ENCODE measurements at regions of chr3 and their contacts with region 1.

Region 1: GRCh38 chr3:112013058-112013783 is 14.5 kb downstream of the TAGLN3 start:
- DNase-seq: peak; percentile 21
- ATAC-seq: peak; percentile 82
- H3K4me3 Mint-ChIP-seq: peak overlapping the region; percentile 21
- H3K27ac Mint-ChIP-seq: no peak overlapping the region
- H3K4me1 Mint-ChIP-seq: peaks cover 16% of the 10 kb centered on the region
- H3K27me3 Mint-ChIP-seq: no peaks in the 10 kb centered on the region
- CTCF ChIP-seq: no peak

Region 2: GRCh38 chr3:111967651-111968274 is 45.5 kb before region 1 on chr3:
- CTCF ChIA-PET with region 1: interaction called, 6 read pairs
- POLR2A ChIA-PET with region 1: no interaction called
- intact Hi-C with region 1: loop called (anchors 1 kb)
- DNase-seq: peak; percentile 39
- ATAC-seq: peak; percentile 90
- H3K4me3 Mint-ChIP-seq: peak overlapping the region; percentile 4
- H3K27ac Mint-ChIP-seq: no peak overlapping the region
- H3K4me1 Mint-ChIP-seq: peaks cover 5% of the 10 kb centered on the region
- H3K27me3 Mint-ChIP-seq: no peaks in the 10 kb centered on the region
- CTCF ChIP-seq: peak; percentile 97

Region 3: GRCh38 chr3:111989061-111989678 is 24.1 kb before region 1 on chr3:
- CTCF ChIA-PET with region 1: interaction called, 81 read pairs
- POLR2A ChIA-PET with region 1: no interaction called
- intact Hi-C with region 1: loop called (anchors 1 kb)
- DNase-seq: no peak
- ATAC-seq: peak; percentile 74
- H3K4me3 Mint-ChIP-seq: no peak overlapping the region
- H3K27ac Mint-ChIP-seq: no peak overlapping the region
- H3K4me1 Mint-ChIP-seq: peaks cover 12% of the 10 kb centered on the region
- H3K27me3 Mint-ChIP-seq: no peaks in the 10 kb centered on the region
- CTCF ChIP-seq: peak; percentile 37

Region 4: GRCh38 chr3:112043603-112044201 is 30.5 kb after region 1 on chr3:
- CTCF ChIA-PET with region 1: interaction called, 6 read pairs
- POLR2A ChIA-PET with region 1: no interaction called
- intact Hi-C with region 1: loop called (anchors 2 kb)
- DNase-seq: no peak
- ATAC-seq: peak; percentile 92
- H3K4me3 Mint-ChIP-seq: no peak overlapping the region
- H3K27ac Mint-ChIP-seq: no peak overlapping the region
- H3K4me1 Mint-ChIP-seq: peaks cover 6% of the 10 kb centered on the region
- H3K27me3 Mint-ChIP-seq: no peaks in the 10 kb centered on the region
- CTCF ChIP-seq: peak; percentile 95